Activated T-helper 1 cell treated with anti-CD3 and anti-CD28 coated beads, Interleukin-12 subunit alpha, Interleukin-12 subunit beta, Interleukin-2, Interleukin-4 antibody, amounts not matched to agents 30 ng/mL and 10 ng/mL and 1 ng/mL, durations not matched to agents 14 hours and 24 hours and 36 hours (primary cell): ENCODE measurements at regions of chr17 and their contacts with region 1.

Region 1: GRCh38 chr17:59521204-59522126 is 43.9 kb upstream of the DHX40 start:
- DNase-seq: peak; percentile 42
- H3K4me3 Mint-ChIP-seq: no peak overlapping the region
- H3K27ac Mint-ChIP-seq: no peak overlapping the region
- H3K4me1 Mint-ChIP-seq: peaks cover 7% of the 10 kb centered on the region
- H3K27me3 Mint-ChIP-seq: peaks cover 25% of the 10 kb centered on the region

Region 2: GRCh38 chr17:59311130-59311920 is 210.1 kb before region 1 on chr17:
- intact Hi-C with region 1: loop called (anchors 1 kb)
- DNase-seq: peak; percentile 40
- H3K4me3 Mint-ChIP-seq: no peak overlapping the region
- H3K27ac Mint-ChIP-seq: no peak overlapping the region
- H3K4me1 Mint-ChIP-seq: peaks cover 8% of the 10 kb centered on the region
- H3K27me3 Mint-ChIP-seq: no peaks in the 10 kb centered on the region

Region 3: GRCh38 chr17:59331129-59331928 is 190.1 kb before region 1 on chr17 and contains the start of gene YPEL2:
- intact Hi-C with region 1: loop called (anchors 5 kb)
- DNase-seq: peak; percentile 88
- H3K4me3 Mint-ChIP-seq: peak within 1 kb of the TSS; percentile 89
- H3K27ac Mint-ChIP-seq: peak within 1 kb of the TSS; percentile 77
- H3K4me1 Mint-ChIP-seq: peaks cover 52% of the 10 kb centered on the region
- H3K27me3 Mint-ChIP-seq: peaks cover 27% of the 10 kb centered on the region
- total RNA-seq, gene YPEL2: 7.4 and 7.9 TPM in 2 replicates

Region 4: DNA sequence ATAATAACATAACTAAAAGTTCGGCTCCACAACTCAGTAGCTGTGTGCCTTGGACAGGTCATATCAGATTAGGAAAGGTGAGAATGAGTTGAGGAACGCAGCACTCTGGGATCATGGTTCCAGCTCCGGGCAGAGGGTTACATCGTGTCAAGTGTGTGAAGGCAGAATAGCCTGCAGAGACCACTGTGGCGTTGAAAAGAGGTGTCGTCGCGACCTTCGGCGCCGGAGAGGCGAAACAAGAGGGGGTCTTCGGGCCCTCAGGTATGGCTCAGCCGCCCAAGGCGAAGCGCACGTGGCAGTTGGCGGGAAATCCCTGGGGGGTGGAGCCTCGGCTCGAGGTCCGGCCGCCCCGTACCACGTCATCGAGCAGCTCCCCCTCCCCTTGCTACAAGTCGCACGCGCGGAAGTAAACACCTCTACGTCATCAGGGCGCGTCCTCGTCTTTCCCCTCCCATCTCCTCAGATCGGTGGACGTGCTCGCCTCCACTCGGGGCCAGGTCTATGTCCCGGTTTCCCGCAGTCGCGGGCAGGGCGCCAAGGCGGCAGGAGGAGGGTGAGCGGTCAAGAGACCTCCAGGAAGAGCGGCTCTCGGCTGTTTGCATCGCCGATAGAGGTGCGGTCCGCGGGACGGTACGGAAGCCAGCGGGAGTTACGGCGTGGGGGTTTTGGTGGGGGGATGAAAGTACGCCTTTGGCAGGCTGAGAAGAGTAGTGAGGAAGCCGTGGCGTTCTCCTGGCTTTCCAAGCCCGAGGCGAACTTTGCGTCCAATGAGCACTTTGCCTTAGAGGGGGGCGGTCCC is 43.9 kb after region 1 on chr17 and contains the start of gene DHX40:
- intact Hi-C with region 1: loop called (anchors 2 kb)
- DNase-seq: peak; percentile 90
- H3K4me3 Mint-ChIP-seq: peak within 1 kb of the TSS; percentile 100
- H3K27ac Mint-ChIP-seq: peak within 1 kb of the TSS; percentile 100
- H3K4me1 Mint-ChIP-seq: peaks cover 24% of the 10 kb centered on the region
- H3K27me3 Mint-ChIP-seq: peaks cover 7% of the 10 kb centered on the region
- total RNA-seq, gene DHX40: 16.8 and 17.1 TPM in 2 replicates

Region 5: GRCh38 chr17:59607817-59608403 is 86.4 kb after region 1 on chr17:
- intact Hi-C with region 1: loop called (anchors 2 kb)
- DNase-seq: no peak
- H3K4me3 Mint-ChIP-seq: no peak overlapping the region
- H3K27ac Mint-ChIP-seq: no peak overlapping the region
- H3K4me1 Mint-ChIP-seq: no peaks in the 10 kb centered on the region
- H3K27me3 Mint-ChIP-seq: no peaks in the 10 kb centered on the region

Region 6: DNA sequence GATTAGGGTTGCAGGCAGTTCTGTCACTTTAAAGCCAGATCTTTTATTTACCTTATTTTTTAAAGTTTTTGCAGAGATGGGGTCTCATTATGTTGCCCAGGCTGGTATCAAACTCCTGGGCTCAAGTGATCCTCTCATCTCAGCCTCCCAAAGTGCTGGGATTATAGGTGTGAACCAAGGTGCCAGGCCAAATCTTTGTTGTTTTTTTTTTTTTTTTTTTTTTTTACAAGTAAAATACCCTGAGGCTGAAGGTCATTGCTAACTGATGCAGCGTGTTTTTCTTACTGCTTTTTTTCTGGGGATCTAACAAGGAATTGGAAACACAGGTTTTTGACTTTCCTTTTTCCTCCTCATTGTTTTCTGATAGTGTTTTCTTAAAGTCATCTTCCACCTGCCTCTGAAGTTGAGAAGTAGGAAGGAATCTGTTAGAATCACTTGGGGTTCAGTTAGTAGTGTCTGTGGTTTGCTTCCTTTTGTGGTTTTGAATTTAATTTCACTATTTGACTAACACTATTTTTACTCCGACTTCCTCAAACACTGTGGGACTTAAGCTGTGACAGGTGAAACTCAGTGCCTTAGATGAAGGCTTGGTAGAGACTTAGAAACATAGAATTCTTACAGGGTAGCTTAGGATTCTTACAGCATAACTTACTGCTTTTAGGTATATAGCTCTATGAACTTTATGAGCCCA is 120.5 kb after region 1 on chr17:
- intact Hi-C with region 1: loop called (anchors 2 kb)
- DNase-seq: peak; percentile 3
- H3K4me3 Mint-ChIP-seq: peak overlapping the region; percentile 16
- H3K27ac Mint-ChIP-seq: peak overlapping the region; percentile 72
- H3K4me1 Mint-ChIP-seq: peaks cover 50% of the 10 kb centered on the region
- H3K27me3 Mint-ChIP-seq: no peaks in the 10 kb centered on the region

Region 7: GRCh38 chr17:60036796-60037612 is 515.5 kb after region 1 on chr17:
- intact Hi-C with region 1: loop called (anchors 5 kb)
- DNase-seq: peak; percentile 53
- H3K4me3 Mint-ChIP-seq: peak overlapping the region; percentile 25
- H3K27ac Mint-ChIP-seq: no peak overlapping the region
- H3K4me1 Mint-ChIP-seq: peaks cover 6% of the 10 kb centered on the region
- H3K27me3 Mint-ChIP-seq: peaks cover 15% of the 10 kb centered on the region